MCF 10A (cell line): ENCODE measurements at regions of chr14 and their contacts with region 1.

Region 1: DNA sequence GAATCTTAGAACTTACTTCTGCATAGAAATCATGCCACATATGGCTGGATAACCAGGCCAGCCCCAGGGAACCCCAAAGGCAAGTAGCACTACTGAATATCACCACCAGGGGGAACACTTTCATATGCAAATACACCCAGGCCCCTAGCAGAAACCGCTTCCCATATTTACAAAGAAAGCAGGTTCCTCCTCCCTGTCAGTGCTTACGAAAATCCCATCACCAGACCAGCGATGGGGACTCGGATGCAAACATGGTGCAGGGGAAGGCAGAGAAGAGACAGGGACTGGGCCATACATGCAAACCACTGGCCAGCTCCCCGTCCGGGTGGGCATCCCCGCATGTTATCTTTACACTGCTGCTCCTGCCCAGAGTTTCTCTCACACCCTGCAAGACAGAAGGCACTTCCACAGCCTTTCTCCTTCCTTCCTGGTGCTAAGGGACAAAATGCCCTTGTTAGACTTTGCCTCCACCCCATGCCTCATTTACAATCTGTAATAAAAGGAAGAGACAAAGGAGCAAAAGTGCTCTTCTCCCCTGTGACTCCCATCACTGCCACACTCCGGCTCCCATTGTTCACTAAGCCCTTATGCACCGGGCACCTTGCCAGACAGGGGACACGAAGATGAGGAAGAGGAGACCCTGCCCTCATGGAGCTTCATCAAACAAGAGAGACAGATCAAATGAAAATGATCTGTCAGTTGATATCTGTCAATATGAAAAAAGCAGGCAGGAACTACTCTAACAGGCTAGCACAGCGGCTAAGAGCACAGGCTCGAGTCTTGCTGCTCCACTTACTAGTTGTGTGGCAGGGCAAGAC is 62.3 kb downstream of the PTPN21 start:
- DNase-seq: peak; percentile 74
- H3K4me3 Mint-ChIP-seq: no peak overlapping the region
- H3K27ac Mint-ChIP-seq: no peak overlapping the region
- H3K4me1 Mint-ChIP-seq: no peaks in the 10 kb centered on the region
- H3K27me3 Mint-ChIP-seq: no peaks in the 10 kb centered on the region
- CTCF ChIP-seq: peak; percentile 77

Region 2: DNA sequence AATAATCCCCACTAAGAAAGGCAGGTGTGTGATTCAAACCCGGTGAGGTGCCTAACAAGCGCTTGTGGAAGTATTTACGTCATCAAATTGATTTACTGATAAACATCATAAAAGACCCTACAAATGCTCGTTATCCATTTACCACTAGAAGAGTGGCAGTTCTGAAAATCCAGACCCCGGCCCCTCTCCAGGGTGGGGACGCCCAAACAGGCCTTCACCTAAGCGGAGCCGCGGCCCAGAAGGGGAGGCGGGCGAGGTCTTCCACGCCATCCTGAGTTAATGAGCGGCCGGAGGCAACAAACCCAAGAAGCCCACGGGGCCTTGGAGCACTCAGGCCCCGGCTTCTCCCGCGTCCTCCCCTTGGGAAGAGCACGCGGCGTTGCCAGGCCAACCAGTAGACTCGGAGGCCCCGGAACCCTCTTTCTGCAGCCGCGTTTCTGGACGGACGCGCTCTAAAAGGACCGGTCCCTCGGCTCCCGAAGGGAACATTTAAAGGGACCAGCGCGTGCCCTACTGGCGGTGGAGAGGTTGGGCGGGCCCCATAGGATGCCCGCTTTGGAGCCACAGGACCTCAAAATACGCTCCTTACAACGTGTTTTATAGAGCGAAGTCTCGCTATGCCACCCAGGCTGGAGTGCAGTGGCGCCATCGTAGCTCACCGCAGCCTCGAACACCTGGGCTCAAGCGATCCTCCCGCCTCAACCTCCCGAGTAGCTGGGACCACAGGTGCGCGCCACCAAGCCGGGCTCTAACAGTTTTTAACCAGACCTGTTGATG is 58.8 kb after region 1 on chr14:
- CTCF ChIA-PET with region 1: interaction called, 3 read pairs
- POLR2A ChIA-PET with region 1: no interaction called
- intact Hi-C with region 1: loop called (anchors 2 kb)
- DNase-seq: peak; percentile 89
- H3K4me3 Mint-ChIP-seq: peak overlapping the region; percentile 78
- H3K27ac Mint-ChIP-seq: peak overlapping the region; percentile 42
- H3K4me1 Mint-ChIP-seq: no peaks in the 10 kb centered on the region
- H3K27me3 Mint-ChIP-seq: no peaks in the 10 kb centered on the region
- CTCF ChIP-seq: peak; percentile 20

Region 3: GRCh38 chr14:88562831-88563686 is 70.6 kb after region 1 on chr14 and contains the start of gene ZC3H14:
- CTCF ChIA-PET with region 1: interaction called, 9 read pairs
- POLR2A ChIA-PET with region 1: no interaction called
- intact Hi-C with region 1: loop called (anchors 2 kb)
- DNase-seq: peak; percentile 85
- H3K4me3 Mint-ChIP-seq: peak within 1 kb of the TSS; percentile 77
- H3K27ac Mint-ChIP-seq: peak within 1 kb of the TSS; percentile 49
- H3K4me1 Mint-ChIP-seq: peaks cover 18% of the 10 kb centered on the region
- H3K27me3 Mint-ChIP-seq: no peaks in the 10 kb centered on the region
- CTCF ChIP-seq: no peak
- total RNA-seq, gene ZC3H14: 64.5 and 72.6 TPM in 2 replicates

Region 4: DNA sequence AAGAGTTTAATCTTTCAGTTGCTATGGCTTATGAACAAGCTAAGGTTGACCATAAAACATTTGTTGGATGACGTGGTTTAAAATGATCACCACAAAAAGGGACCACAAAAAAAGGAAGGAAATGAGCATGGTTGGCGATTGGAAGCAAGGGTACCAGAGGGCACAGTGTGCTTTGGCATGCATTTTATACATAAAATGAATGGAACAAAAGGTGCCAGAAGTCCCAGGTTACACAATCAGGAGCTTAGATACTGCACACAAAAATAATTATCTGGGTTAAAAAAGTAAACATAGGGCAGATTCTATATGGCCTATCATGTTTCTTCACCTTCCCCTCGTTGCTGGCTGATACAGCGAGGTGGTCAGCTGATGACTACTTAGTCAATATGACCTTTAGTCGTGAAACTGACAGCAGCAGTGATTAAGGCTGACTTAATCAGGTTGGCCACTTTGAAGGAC is 121.1 kb after region 1 on chr14:
- CTCF ChIA-PET with region 1: no interaction called
- POLR2A ChIA-PET with region 1: no interaction called
- intact Hi-C with region 1: no loop called
- DNase-seq: peak; percentile 42
- H3K4me3 Mint-ChIP-seq: no peak overlapping the region
- H3K27ac Mint-ChIP-seq: peak overlapping the region; percentile 75
- H3K4me1 Mint-ChIP-seq: peaks cover 12% of the 10 kb centered on the region
- H3K27me3 Mint-ChIP-seq: no peaks in the 10 kb centered on the region
- CTCF ChIP-seq: no peak

Region 5: DNA sequence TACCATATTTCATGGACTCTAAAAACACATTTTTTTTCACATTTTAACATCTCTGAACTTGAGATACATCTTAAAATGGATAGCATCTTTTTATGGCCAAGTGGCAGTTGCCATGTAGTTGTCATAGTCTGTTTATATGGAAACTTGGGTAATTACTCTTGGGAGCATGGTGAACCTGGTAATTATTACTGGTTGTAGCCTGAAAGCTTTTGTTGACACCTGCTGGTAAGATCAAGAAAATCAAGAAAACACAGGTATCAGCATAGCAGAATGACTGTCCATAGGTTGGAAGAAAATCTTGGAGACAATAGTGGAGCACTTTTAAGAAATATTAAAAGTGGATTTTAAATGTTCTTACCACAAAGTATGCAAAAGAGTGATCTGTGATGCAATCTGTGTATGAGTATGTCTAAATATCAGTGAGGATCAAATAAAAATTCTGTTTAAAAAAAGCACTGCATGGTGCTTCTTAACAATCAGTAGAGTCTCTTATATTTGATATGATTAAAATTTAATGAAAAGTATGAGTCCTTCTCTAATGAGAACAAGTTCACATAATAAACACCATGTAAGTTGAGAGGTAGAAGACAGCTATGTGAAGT is 376.2 kb after region 1 on chr14:
- CTCF ChIA-PET with region 1: no interaction called
- POLR2A ChIA-PET with region 1: no interaction called
- intact Hi-C with region 1: loop called (anchors 5 kb)
- DNase-seq: peak; percentile 51
- H3K4me3 Mint-ChIP-seq: no peak overlapping the region
- H3K27ac Mint-ChIP-seq: no peak overlapping the region
- H3K4me1 Mint-ChIP-seq: no peaks in the 10 kb centered on the region
- H3K27me3 Mint-ChIP-seq: no peaks in the 10 kb centered on the region
- CTCF ChIP-seq: peak; percentile 61